ENCODE measurements at regions of chr22 and their contacts with region 1.

Region 1: GRCh38 chr22:46762238-46763050 is at the start of gene TBC1D22A:
- DNase-seq: peak; percentile 96
- ATAC-seq: peak; percentile 95
- H3K4me3 Mint-ChIP-seq: peak within 1 kb of the TSS; percentile 100
- H3K27ac Mint-ChIP-seq: peak within 1 kb of the TSS; percentile 99
- H3K4me1 Mint-ChIP-seq: peaks cover 54% of the 10 kb centered on the region
- H3K27me3 Mint-ChIP-seq: no peaks in the 10 kb centered on the region
- total RNA-seq, gene TBC1D22A: 34.1 to 38.7 TPM

Region 2: DNA sequence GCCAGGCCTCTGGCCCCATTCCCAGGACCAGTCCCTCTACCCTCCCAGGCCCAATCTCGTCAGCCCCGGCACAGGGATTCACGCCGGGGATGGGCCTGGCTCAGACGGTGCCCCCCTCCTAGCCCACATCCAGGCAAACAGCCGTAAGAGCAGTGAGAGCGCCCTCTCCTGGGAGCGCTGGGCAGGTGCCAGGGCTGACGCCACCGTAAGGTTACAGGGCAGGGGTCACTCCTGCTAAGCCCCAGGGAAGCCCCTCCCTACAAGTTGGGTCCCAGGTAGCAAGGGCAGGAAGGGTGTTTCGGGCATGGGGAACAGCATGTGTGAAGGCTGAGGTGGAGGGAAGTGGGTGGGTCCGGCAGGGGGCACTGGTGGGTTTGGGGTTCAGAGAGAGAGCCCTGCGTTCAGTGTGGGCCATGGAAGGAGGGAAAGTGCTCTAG is 631.3 kb before region 1 on chr22:
- CTCF ChIA-PET with region 1: no interaction called
- POLR2A ChIA-PET with region 1: no interaction called
- DNase-seq: no peak
- ATAC-seq: no peak
- H3K4me3 Mint-ChIP-seq: no peak overlapping the region
- H3K27ac Mint-ChIP-seq: no peak overlapping the region
- H3K4me1 Mint-ChIP-seq: no peaks in the 10 kb centered on the region
- H3K27me3 Mint-ChIP-seq: no peaks in the 10 kb centered on the region

Region 3: GRCh38 chr22:46714550-46714949 is 47.9 kb before region 1 on chr22:
- CTCF ChIA-PET with region 1: no interaction called
- POLR2A ChIA-PET with region 1: no interaction called
- DNase-seq: no peak
- ATAC-seq: no peak
- H3K4me3 Mint-ChIP-seq: no peak overlapping the region
- H3K27ac Mint-ChIP-seq: no peak overlapping the region
- H3K4me1 Mint-ChIP-seq: no peaks in the 10 kb centered on the region
- H3K27me3 Mint-ChIP-seq: no peaks in the 10 kb centered on the region

Region 4: GRCh38 chr22:46748908-46749675 is 13.4 kb before region 1 on chr22:
- CTCF ChIA-PET with region 1: interaction called, 67 read pairs
- POLR2A ChIA-PET with region 1: interaction called, 33 read pairs
- DNase-seq: peak; percentile 81
- ATAC-seq: peak; percentile 93
- H3K4me3 Mint-ChIP-seq: peak overlapping the region; percentile 73
- H3K27ac Mint-ChIP-seq: peak overlapping the region; percentile 98
- H3K4me1 Mint-ChIP-seq: peaks cover 24% of the 10 kb centered on the region
- H3K27me3 Mint-ChIP-seq: peaks cover 2% of the 10 kb centered on the region

Region 5: DNA sequence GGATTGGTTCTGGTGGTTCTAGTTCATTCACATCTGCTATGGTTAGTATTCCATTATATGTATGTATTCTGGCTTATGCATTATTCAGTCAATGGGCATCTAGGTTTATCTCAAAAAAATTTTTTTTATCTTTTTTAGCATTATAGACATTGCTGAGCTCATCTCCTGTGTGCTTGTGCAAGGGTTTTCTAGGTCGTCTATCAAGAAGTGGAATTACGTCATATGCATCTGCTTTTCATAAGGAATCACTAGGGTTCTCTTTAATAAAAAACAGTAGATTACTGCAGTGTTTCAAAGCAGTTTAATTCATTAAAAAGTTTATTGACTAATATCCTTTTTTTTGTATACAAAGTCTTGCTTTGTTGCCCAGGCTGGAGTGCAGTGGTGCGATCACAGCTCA is 21.3 kb after region 1 on chr22:
- CTCF ChIA-PET with region 1: interaction called, 12 read pairs
- POLR2A ChIA-PET with region 1: interaction called, 6 read pairs
- DNase-seq: no peak
- ATAC-seq: no peak
- H3K4me3 Mint-ChIP-seq: no peak overlapping the region
- H3K27ac Mint-ChIP-seq: no peak overlapping the region
- H3K4me1 Mint-ChIP-seq: peaks cover 15% of the 10 kb centered on the region
- H3K27me3 Mint-ChIP-seq: no peaks in the 10 kb centered on the region

Region 6: DNA sequence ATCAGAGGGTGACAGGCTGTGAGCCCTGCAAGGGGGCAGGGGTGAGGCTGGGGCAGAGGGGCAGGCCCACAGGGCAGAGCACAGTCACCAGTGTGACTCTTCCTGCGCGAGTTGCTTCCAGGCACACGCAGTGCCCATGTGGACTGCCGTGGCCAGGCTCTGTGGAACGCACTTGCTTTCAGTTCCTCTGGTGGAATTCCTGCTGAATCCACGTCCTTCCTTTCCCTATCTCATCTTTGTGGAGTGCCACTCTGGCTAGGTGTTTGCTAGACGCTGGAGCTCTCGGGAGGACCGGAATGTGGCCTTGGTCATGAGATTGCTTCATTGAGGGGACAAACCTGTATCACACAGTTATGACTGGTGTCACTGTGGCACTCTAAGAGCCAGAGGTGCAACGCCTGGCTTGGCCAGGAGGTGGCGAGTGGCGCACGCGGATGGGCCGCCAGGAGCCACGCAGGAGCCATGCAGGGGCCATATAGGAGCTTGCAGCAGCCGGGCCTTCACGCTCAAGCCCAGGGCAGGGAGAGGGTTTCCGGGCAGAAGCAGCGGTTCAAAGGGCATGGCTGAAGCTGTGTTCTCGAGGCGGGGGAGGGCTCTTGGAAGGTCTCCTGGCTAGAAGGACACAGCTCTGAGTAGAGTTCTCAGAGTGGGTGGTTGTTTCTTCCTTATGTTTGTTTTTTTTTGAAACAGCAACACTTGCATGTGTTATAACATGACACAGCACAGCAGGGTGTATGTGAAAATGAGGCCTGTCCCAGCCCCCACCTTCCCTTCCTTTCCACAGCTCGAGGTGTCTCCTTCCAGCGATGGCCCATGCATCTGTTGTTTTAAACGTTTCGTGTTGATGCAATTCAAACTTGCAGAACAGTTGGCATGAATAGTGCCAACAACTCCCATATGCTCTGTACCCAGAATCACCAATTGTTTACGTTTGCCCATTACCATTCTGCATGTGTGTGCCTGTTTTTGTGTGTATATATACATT is 36.2 kb after region 1 on chr22:
- CTCF ChIA-PET with region 1: interaction called, 88 read pairs
- POLR2A ChIA-PET with region 1: interaction called, 9 read pairs
- DNase-seq: peak; percentile 82
- ATAC-seq: peak; percentile 87
- H3K4me3 Mint-ChIP-seq: no peak overlapping the region
- H3K27ac Mint-ChIP-seq: peak overlapping the region; percentile 69
- H3K4me1 Mint-ChIP-seq: peaks cover 29% of the 10 kb centered on the region
- H3K27me3 Mint-ChIP-seq: no peaks in the 10 kb centered on the region

Measured in activated CD8-positive, alpha-beta T cell treated with anti-CD3 and anti-CD28 coated beads, Interleukin-2, amount 10 ng/mL, durations not matched to agents 7 days and 5 days (primary cell).